Gastrocnemius medialis (tissue), 4 donors: ENCODE measurements at regions of chrX and their contacts with region 1.

Region 1: DNA sequence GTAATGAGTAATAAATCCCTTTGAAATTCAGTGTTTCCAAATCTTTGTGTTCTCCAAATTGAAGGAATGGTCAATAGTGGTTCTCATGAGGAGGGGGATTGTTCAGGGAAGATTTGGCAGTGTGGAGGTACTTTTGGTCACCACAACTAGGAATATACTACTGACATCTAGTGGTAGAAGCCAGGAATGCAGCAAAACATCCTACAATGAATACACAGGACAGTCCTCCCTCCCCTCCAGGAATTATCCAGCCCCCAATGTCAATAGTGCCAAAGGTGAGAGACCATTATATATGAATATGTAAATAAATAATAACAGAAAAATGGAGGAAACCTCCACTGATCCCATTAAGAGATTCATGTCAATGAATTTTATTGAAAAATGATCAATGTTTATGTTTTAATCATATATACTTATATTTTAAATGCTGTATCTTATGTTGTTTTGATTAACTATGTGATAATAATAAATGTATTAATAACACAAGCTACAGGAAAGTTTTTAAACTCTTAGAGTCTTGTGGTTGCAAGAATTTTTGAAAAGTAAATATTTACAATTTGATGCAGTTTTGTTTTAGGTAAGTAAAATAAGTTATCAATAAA is 14.4 kb upstream of the FAM9A start:
- DNase-seq: no peak
- ATAC-seq: no peak
- H3K4me3 ChIP-seq: no peak overlapping the region
- H3K27ac ChIP-seq: no peak overlapping the region
- H3K4me1 ChIP-seq: no peaks in the 10 kb centered on the region
- H3K27me3 ChIP-seq: no peaks in the 10 kb centered on the region
- CTCF ChIP-seq: peak; percentile 16 to 73 (median 50)
- POLR2A ChIP-seq: no peak

Region 2: GRCh38 chrX:6867354-6867753 is 1948.2 kb before region 1 on chrX:
- in situ Hi-C with region 1: no loop called
- intact Hi-C with region 1: no loop called
- DNase-seq: no peak
- ATAC-seq: no peak
- H3K4me3 ChIP-seq: no peak overlapping the region
- H3K27ac ChIP-seq: no peak overlapping the region
- H3K4me1 ChIP-seq: no peaks in the 10 kb centered on the region
- H3K27me3 ChIP-seq: no peaks in the 10 kb centered on the region
- CTCF ChIP-seq: no peak
- POLR2A ChIP-seq: no peak

Region 3: DNA sequence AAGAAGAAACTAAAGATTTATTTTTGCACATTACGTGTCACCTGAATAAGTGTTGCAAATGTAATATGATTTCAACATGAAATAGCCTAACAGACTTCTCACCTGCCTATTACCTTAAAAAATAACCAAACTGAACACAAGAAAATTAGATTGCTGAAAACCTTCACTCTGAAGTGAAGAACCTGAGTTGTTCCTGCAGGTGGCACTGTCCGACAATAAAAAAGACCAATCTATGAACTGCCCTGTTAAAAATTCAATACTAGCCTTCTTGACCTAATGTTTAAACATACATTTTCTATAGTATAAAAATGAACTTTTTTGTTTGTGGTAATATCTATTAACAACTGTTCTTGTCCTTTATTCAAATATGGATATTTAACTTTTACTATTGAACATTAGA is 819.2 kb before region 1 on chrX:
- in situ Hi-C with region 1: no loop called
- intact Hi-C with region 1: loop called (anchors 5 kb)
- DNase-seq: no peak
- ATAC-seq: peak in 1 of 2 donors; percentile 39
- H3K4me3 ChIP-seq: no peak overlapping the region
- H3K27ac ChIP-seq: no peak overlapping the region
- H3K4me1 ChIP-seq: no peaks in the 10 kb centered on the region
- H3K27me3 ChIP-seq: no peaks in the 10 kb centered on the region
- CTCF ChIP-seq: peak; percentile 38 to 54 (median 42)
- POLR2A ChIP-seq: no peak